ENCODE measurements at regions of chr1 and their contacts with region 1.

Region 1: GRCh38 chr1:94095112-94095637 is 25.8 kb downstream of the ABCA4 start:
- DNase-seq: peak; percentile 92
- H3K4me3 ChIP-seq: peak overlapping the region in 1 of 4 donors; percentile 13
- H3K27ac ChIP-seq: peak overlapping the region; percentile 73 to 90 (median 76)
- H3K4me1 ChIP-seq: peaks cover 0 to 57% (median 48%) of the 10 kb centered on the region in 4 donors
- H3K27me3 ChIP-seq: no peaks in the 10 kb centered on the region
- CTCF ChIP-seq: no peak
- EP300 ChIP-seq: peak in 1 of 4 donors; percentile 18
- POLR2A ChIP-seq: no peak

Region 2: GRCh38 chr1:94068999-94069918 is 25.9 kb before region 1 on chr1:
- intact Hi-C with region 1: loop called (anchors 1 kb)
- DNase-seq: peak; percentile 78
- H3K4me3 ChIP-seq: no peak overlapping the region
- H3K27ac ChIP-seq: peak overlapping the region; percentile 55 to 84 (median 66)
- H3K4me1 ChIP-seq: peaks cover 0 to 74% (median 62%) of the 10 kb centered on the region in 4 donors
- H3K27me3 ChIP-seq: no peaks in the 10 kb centered on the region
- CTCF ChIP-seq: no peak
- EP300 ChIP-seq: no peak
- POLR2A ChIP-seq: no peak